K562 (cell line): ENCODE measurements at regions of chr7 and their contacts with region 1.

Region 1: GRCh38 chr7:8785077-8785476 is 351.7 kb downstream of the NXPH1 start:
- DNase-seq: no peak
- ATAC-seq: peak; percentile 83
- H3K4me3 ChIP-seq: no peak overlapping the region
- H3K27ac ChIP-seq: no peak overlapping the region
- H3K4me1 ChIP-seq: no peaks in the 10 kb centered on the region; a peak in 1 of 5 replicates
- H3K27me3 ChIP-seq: no peaks in the 10 kb centered on the region
- CTCF ChIP-seq: peak; percentile 18 to 35 (median 26); a peak in 3 of 6 replicates
- EP300 ChIP-seq: no peak
- POLR2A ChIP-seq: no peak
- RAD21 ChIP-seq: peak in 1 of 2 experiments; percentile 12; a peak in 1 of 4 replicates

Region 2: GRCh38 chr7:8823486-8823885 is 38.4 kb after region 1 on chr7:
- CTCF ChIA-PET with region 1: no interaction called
- POLR2A ChIA-PET with region 1: interaction called, 8 read pairs
- in situ Hi-C with region 1: loop called (anchors 5 kb)
- intact Hi-C with region 1: loop called (anchors 1 kb)
- DNase-seq: no peak
- ATAC-seq: no peak
- H3K4me3 ChIP-seq: no peak overlapping the region
- H3K27ac ChIP-seq: no peak overlapping the region
- H3K4me1 ChIP-seq: no peaks in the 10 kb centered on the region; a peak in 1 of 5 replicates
- H3K27me3 ChIP-seq: no peaks in the 10 kb centered on the region
- CTCF ChIP-seq: peak in 1 of 3 experiments; percentile 29; a peak in 2 of 6 replicates
- EP300 ChIP-seq: no peak
- POLR2A ChIP-seq: no peak
- RAD21 ChIP-seq: peak in 1 of 2 experiments; percentile 33; a peak in 2 of 4 replicates

Region 3: DNA sequence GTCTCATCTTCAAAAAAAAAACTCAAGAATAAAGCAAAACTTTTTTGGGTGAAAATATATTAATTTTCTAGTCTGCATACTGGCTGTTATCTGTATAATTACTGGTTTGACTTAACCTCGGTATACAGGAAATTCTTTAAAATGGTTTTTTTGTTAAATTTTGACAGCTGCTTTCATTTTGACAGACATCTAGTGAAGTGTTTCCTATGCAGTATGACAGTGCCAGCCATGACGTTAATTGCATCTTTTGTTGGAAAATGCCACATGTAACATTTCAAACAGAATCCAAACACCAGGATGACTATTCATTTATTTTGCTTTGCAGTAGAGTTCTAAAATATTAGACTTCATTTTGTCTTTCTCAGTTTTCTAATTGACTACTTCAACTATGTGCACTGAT is 108.7 kb after region 1 on chr7:
- CTCF ChIA-PET with region 1: no interaction called
- POLR2A ChIA-PET with region 1: no interaction called
- in situ Hi-C with region 1: no loop called
- intact Hi-C with region 1: no loop called
- DNase-seq: no peak
- ATAC-seq: no peak
- H3K4me3 ChIP-seq: no peak overlapping the region
- H3K27ac ChIP-seq: no peak overlapping the region
- H3K4me1 ChIP-seq: no peaks in the 10 kb centered on the region
- H3K27me3 ChIP-seq: no peaks in the 10 kb centered on the region
- CTCF ChIP-seq: no peak
- EP300 ChIP-seq: no peak
- POLR2A ChIP-seq: no peak
- RAD21 ChIP-seq: no peak